Psoas muscle (tissue), 8 donors: ENCODE measurements at regions of chr21 and their contacts with region 1.

Region 1: DNA sequence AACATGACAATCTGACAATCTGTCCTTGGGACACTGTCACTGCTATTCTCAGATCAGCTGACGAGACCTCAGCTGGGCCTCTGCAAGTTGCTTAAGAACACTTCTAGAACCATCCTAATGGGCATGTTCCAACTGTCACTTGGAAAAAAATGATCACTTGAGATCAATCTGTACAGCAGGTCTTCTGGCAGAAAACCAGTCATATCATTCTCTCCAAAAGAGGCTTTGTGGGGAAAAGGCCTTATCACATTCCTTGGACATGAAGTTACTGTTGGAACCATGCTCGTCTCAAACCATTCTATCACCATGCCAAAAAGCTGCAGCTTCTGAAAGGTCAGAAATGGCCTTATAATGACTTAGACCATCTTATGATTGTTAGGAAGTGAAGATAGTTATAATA is 744.2 kb downstream of the USP25 start:
- DNase-seq: no peak
- ATAC-seq: peak; percentile 46 to 86 (median 78)
- H3K4me3 ChIP-seq: no peak overlapping the region
- H3K27ac ChIP-seq: peak overlapping the region; percentile 59
- H3K4me1 ChIP-seq: peaks cover 29% of the 10 kb centered on the region
- H3K27me3 ChIP-seq: no peaks in the 10 kb centered on the region
- CTCF ChIP-seq: no peak

Region 2: GRCh38 chr21:16522490-16522889 is 48.5 kb after region 1 on chr21:
- intact Hi-C with region 1: loop called in 1 of 2 experiments (anchors 10 kb)
- DNase-seq: no peak
- ATAC-seq: no peak
- H3K4me3 ChIP-seq: no peak overlapping the region
- H3K27ac ChIP-seq: no peak overlapping the region
- H3K4me1 ChIP-seq: no peaks in the 10 kb centered on the region
- H3K27me3 ChIP-seq: no peaks in the 10 kb centered on the region
- CTCF ChIP-seq: no peak